Activated B cell treated with CpG ODN at 0.5 μM for 24 hours (primary cell): ENCODE measurements at regions of chr17 and their contacts with region 1.

Region 1: DNA sequence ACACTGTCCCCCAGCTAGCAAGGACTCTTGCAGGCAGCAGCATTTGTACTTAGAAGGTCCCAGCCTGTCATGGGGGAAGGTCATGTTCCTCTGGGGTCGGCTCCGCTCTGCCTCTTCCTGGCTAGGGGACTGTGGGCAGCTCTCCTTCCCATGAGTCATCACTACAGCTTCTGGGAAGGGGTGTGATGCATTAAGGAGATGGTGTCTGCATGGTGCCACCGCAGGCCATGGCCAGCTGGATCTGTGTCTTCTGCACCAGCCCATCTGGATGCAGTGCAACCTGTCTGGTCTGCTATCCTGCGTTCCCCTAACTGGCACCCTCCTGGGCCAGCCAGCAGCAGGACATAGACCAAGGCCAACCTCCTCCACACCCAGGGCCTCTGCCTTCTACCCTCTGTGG is 6.3 kb downstream of the STARD3 start:
- DNase-seq: no peak
- ATAC-seq: no peak
- H3K4me3 Mint-ChIP-seq: no peak overlapping the region
- H3K27ac Mint-ChIP-seq: no peak overlapping the region
- H3K4me1 Mint-ChIP-seq: peaks cover 55% of the 10 kb centered on the region
- H3K27me3 Mint-ChIP-seq: no peaks in the 10 kb centered on the region
- CTCF ChIP-seq: no peak

Region 2: GRCh38 chr17:39473310-39473709 is 170.0 kb before region 1 on chr17:
- CTCF ChIA-PET with region 1: no interaction called
- POLR2A ChIA-PET with region 1: no interaction called
- intact Hi-C with region 1: no loop called
- DNase-seq: no peak
- ATAC-seq: no peak
- H3K4me3 Mint-ChIP-seq: no peak overlapping the region
- H3K27ac Mint-ChIP-seq: no peak overlapping the region
- H3K4me1 Mint-ChIP-seq: no peaks in the 10 kb centered on the region
- H3K27me3 Mint-ChIP-seq: no peaks in the 10 kb centered on the region
- CTCF ChIP-seq: no peak

Region 3: GRCh38 chr17:39653662-39654331 is 10.5 kb after region 1 on chr17:
- CTCF ChIA-PET with region 1: interaction called, 12 read pairs
- POLR2A ChIA-PET with region 1: no interaction called
- intact Hi-C with region 1: no loop called
- DNase-seq: no peak
- ATAC-seq: peak; percentile 75
- H3K4me3 Mint-ChIP-seq: no peak overlapping the region
- H3K27ac Mint-ChIP-seq: no peak overlapping the region
- H3K4me1 Mint-ChIP-seq: peaks cover 33% of the 10 kb centered on the region
- H3K27me3 Mint-ChIP-seq: no peaks in the 10 kb centered on the region
- CTCF ChIP-seq: no peak